Left ventricle myocardium inferior (tissue), 1 donor: ENCODE measurements at regions of chr3 and their contacts with region 1.

Region 1: DNA sequence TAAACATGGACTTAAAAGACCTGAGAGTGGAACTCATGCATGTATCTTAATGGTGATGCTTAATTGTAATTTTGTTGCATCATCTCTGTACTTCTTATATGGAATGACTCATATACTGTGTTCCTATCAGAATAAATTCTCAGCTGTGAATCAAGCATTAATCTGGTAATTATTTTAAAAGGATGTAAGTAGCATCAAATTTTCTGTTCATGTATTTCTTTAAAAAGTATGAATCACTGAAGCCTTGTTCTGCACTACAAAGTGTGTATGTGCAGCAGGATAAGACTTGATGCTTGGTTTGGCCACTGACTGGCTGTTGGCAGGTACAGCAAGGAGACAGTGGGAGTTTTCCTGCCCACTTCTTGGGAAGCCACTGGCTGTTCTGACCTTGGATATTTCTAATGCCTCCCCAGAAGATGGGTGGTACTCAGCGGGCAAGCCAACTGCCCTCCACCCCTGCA is 123.9 kb downstream of the ANO10 start:
- DNase-seq: no peak
- H3K4me3 ChIP-seq: no peak overlapping the region
- H3K27ac ChIP-seq: peak overlapping the region; percentile 43
- H3K4me1 ChIP-seq: peaks cover 32% of the 10 kb centered on the region
- H3K27me3 ChIP-seq: no peaks in the 10 kb centered on the region
- CTCF ChIP-seq: no peak

Region 2: GRCh38 chr3:43389388-43390254 is 108.3 kb before region 1 on chr3:
- intact Hi-C with region 1: loop called (anchors 10 kb)
- DNase-seq: no peak
- H3K4me3 ChIP-seq: no peak overlapping the region
- H3K27ac ChIP-seq: peak overlapping the region; percentile 85
- H3K4me1 ChIP-seq: peaks cover 50% of the 10 kb centered on the region
- H3K27me3 ChIP-seq: no peaks in the 10 kb centered on the region
- CTCF ChIP-seq: no peak